IMR-90 (cell line): ENCODE measurements at regions of chr2 and their contacts with region 1.

Region 1: GRCh38 chr2:151409601-151410484 is at the start of gene RIF1:
- DNase-seq: peak; percentile 93
- ATAC-seq: peak; percentile 98
- H3K4me3 ChIP-seq: peak within 1 kb of the TSS; percentile 87
- H3K27ac ChIP-seq: peak within 1 kb of the TSS; percentile 91
- H3K4me1 ChIP-seq: no peaks in the 10 kb centered on the region
- H3K27me3 ChIP-seq: no peaks in the 10 kb centered on the region
- CTCF ChIP-seq: peak; percentile 54
- POLR2A ChIP-seq: peak; percentile 72; the same call in 1 of the 2 replicates
- RAD21 ChIP-seq: no peak; the same call in 1 of the 2 replicates
- total RNA-seq, gene RIF1: 43.9 and 53.6 TPM in 2 replicates

Region 2: DNA sequence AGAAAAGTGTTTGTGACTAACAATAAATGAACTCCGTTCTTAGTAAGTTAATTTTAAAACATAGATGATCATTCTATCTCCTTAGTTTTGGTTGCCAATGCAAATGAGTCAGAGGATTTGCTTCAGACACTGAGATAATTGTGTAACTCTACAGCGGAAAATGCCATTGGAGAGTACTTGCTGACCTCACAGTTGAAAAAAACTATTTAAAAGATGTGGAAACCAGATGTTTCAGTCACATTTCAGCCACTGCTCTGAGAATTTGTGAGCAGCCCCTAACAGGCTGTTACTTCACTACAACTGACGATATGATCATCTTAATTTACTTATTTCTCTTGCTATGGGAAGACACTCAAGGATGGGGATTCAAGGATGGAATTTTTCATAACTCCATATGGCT is 52.5 kb before region 1 on chr2 and contains the start of gene TNFAIP6:
- CTCF ChIA-PET with region 1: no interaction called
- POLR2A ChIA-PET with region 1: no interaction called
- dilution Hi-C with region 1: no loop called
- in situ Hi-C with region 1: no loop called
- intact Hi-C with region 1: loop called (anchors 1 kb)
- DNase-seq: peak; percentile 97
- ATAC-seq: peak; percentile 86
- H3K4me3 ChIP-seq: peak within 1 kb of the TSS; percentile 10
- H3K27ac ChIP-seq: peak within 1 kb of the TSS; percentile 58; the same call in 1 of the 2 replicates
- H3K4me1 ChIP-seq: peaks cover 3% of the 10 kb centered on the region
- H3K27me3 ChIP-seq: no peaks in the 10 kb centered on the region
- CTCF ChIP-seq: no peak
- POLR2A ChIP-seq: peak; percentile 95
- RAD21 ChIP-seq: no peak
- total RNA-seq, gene TNFAIP6: 2.2 and 2.9 TPM in 2 replicates

Region 3: DNA sequence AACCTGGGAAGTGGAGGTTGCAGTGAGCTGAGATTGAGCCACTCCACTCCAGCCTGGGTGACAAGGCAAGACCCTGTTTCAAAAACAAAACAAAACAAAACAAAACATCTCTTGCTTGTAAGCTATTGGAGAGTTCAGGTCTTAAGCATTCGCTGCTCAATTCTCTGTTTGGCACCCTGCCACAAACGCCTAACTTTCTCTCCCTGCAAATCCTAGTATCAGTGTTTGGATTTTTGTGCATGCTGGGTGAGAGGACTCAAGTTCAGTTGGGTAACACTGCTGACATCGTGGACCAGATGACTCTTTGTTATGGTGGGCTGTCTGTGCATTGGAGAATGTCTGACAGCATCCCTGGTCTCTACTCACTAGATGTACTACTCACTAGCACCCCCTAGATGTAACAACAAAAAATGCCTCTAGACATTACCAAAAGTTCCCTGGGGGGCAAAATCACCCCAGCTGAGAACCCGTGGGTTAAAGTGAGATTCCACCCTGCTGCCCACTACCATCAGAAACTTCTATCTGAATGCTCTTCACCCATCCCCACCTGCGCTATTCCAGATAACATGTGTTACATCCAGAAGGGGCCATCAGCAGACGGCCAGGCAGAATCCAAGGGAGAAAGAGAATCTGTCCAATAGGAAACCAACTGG is 638.1 kb after region 1 on chr2:
- CTCF ChIA-PET with region 1: no interaction called
- POLR2A ChIA-PET with region 1: no interaction called
- dilution Hi-C with region 1: no loop called
- in situ Hi-C with region 1: no loop called
- intact Hi-C with region 1: no loop called
- DNase-seq: no peak
- ATAC-seq: no peak
- H3K4me3 ChIP-seq: no peak overlapping the region
- H3K27ac ChIP-seq: no peak overlapping the region
- H3K4me1 ChIP-seq: no peaks in the 10 kb centered on the region
- H3K27me3 ChIP-seq: peaks cover 27% of the 10 kb centered on the region
- CTCF ChIP-seq: no peak; the same call in 1 of the 2 replicates
- POLR2A ChIP-seq: no peak
- RAD21 ChIP-seq: no peak